GM10248 (cell line): ENCODE measurements at regions of chr3 and their contacts with region 1.

Region 1: GRCh38 chr3:56339671-56340070 is 128.6 kb downstream of the ERC2 start:
- DNase-seq: no peak
- CTCF ChIP-seq: no peak

Region 2: GRCh38 chr3:56183529-56183928 is 156.1 kb before region 1 on chr3:
- CTCF ChIA-PET with region 1: no interaction called
- POLR2A ChIA-PET with region 1: no interaction called
- DNase-seq: no peak
- CTCF ChIP-seq: no peak

Region 3: DNA sequence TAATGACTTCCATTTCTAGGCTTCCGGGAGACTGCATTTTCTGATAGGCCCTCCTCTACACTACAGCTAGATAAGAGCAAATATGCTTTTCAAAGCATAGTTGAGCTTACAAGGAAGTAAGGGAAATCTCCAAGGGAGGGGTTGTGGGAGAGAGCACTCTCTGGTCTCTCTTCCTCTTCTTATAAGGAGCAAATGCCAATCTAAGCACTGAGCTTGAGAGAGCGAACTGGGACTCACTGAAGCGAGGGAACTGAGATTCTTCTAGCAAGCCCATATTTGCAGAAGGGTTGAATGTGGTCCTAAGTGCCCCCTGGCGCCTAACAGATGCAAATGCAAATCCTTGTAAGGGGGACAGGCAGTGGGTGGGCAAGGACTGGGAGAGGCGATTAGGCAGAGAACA is 36.2 kb before region 1 on chr3:
- CTCF ChIA-PET with region 1: interaction called, 10 read pairs
- POLR2A ChIA-PET with region 1: no interaction called
- DNase-seq: peak; percentile 36
- CTCF ChIP-seq: peak; percentile 34

Region 4: DNA sequence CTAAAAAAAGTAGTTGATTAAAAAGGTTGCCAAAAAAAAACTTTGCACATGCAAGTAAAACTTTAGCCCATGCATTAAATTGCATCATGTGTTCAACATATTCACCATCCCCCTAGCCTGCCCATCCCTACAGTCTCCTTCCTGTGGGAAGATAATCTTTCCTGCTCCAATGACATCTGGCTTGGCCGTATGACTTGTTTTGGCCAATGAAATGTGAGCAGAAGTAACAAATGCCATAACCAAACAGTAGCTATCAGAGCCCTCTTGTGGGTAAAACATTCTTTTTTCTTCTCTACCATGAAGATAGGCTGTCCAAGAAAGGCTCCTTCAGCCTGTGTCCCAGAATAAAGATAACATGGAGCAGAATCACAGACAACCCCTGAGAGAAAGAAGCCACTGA is 113.3 kb after region 1 on chr3:
- CTCF ChIA-PET with region 1: interaction called, 21 read pairs
- POLR2A ChIA-PET with region 1: no interaction called
- DNase-seq: no peak
- CTCF ChIP-seq: no peak